ENCODE measurements at regions of chr6 and their contacts with region 1.

Region 1: DNA sequence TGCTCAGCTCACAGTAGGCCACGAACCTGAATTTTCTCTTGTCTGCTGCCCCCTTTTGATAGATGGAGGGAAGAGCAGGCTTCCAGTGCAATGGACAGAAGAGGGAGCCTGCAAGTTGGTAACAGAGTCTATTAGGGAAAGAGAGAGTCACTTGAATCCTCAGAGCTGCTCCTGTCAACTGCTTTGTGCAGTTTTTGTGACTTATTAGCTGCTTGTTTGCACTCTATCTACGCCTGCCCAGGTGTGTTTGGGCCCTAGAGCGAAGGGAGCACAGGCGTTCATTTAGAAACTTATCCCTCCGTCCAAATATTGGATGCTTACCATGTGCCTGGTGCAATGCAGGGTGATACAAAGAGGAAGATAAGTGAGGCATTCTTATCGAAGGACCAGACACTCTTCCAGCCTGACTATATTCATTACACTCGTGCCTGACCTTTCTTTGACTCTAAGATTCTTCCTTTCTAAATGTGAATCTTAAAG is 11.6 kb upstream of the SLC2A12 start:
- DNase-seq: peak in 2 of 3 donors; percentile 42 to 65
- ATAC-seq: peak; percentile 87 to 90
- H3K4me3 ChIP-seq: no peak overlapping the region
- H3K27ac ChIP-seq: no peak overlapping the region
- H3K4me1 ChIP-seq: peaks cover 2% of the 10 kb centered on the region
- H3K27me3 ChIP-seq: no peaks in the 10 kb centered on the region

Region 2: GRCh38 chr6:133715270-133715669 is 348.7 kb before region 1 on chr6:
- intact Hi-C with region 1: no loop called
- DNase-seq: no peak
- ATAC-seq: no peak
- H3K4me3 ChIP-seq: no peak overlapping the region
- H3K27ac ChIP-seq: no peak overlapping the region
- H3K4me1 ChIP-seq: no peaks in the 10 kb centered on the region
- H3K27me3 ChIP-seq: no peaks in the 10 kb centered on the region

Region 3: GRCh38 chr6:133923938-133924593 is 139.9 kb before region 1 on chr6:
- intact Hi-C with region 1: loop called in 3 of 4 experiments (anchors 10 kb)
- DNase-seq: peak; percentile 34 to 69 (median 58)
- ATAC-seq: peak; percentile 90 to 93
- H3K4me3 ChIP-seq: no peak overlapping the region
- H3K27ac ChIP-seq: no peak overlapping the region
- H3K4me1 ChIP-seq: no peaks in the 10 kb centered on the region
- H3K27me3 ChIP-seq: no peaks in the 10 kb centered on the region

Region 4: GRCh38 chr6:133966654-133967329 is 97.2 kb before region 1 on chr6:
- intact Hi-C with region 1: loop called in 3 of 4 experiments (anchors 5 to 10 kb)
- DNase-seq: no peak
- ATAC-seq: no peak
- H3K4me3 ChIP-seq: no peak overlapping the region
- H3K27ac ChIP-seq: no peak overlapping the region
- H3K4me1 ChIP-seq: peaks cover 2% of the 10 kb centered on the region
- H3K27me3 ChIP-seq: no peaks in the 10 kb centered on the region

Region 5: GRCh38 chr6:133973109-133973971 is 90.7 kb before region 1 on chr6:
- intact Hi-C with region 1: loop called (anchors 5 to 10 kb)
- DNase-seq: no peak
- ATAC-seq: no peak
- H3K4me3 ChIP-seq: no peak overlapping the region
- H3K27ac ChIP-seq: no peak overlapping the region
- H3K4me1 ChIP-seq: no peaks in the 10 kb centered on the region
- H3K27me3 ChIP-seq: no peaks in the 10 kb centered on the region

Region 6: DNA sequence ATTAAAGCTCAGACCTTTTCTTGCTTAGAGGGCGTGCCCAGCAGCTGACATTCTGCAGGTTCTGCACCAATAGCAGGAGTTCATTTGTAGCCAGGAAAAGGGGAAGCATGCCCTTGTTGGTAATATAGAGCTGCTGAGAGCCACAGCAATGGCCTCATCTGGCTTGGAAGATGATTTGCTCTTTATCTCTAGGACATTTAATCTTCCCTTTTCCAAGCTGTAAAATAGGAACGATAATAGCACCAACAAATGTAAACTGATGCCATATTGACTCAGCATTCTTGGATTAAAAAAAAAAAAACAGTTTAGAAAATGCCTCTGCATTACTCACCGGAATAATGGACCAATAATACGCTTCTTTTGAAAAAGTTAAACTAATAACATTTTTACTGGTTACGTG is 81.8 kb after region 1 on chr6:
- intact Hi-C with region 1: no loop called
- DNase-seq: no peak
- ATAC-seq: peak; percentile 40 to 52
- H3K4me3 ChIP-seq: no peak overlapping the region
- H3K27ac ChIP-seq: no peak overlapping the region
- H3K4me1 ChIP-seq: no peaks in the 10 kb centered on the region
- H3K27me3 ChIP-seq: no peaks in the 10 kb centered on the region